Mammary epithelial cell (primary cell): ENCODE measurements at regions of chr11 and their contacts with region 1.

Region 1: DNA sequence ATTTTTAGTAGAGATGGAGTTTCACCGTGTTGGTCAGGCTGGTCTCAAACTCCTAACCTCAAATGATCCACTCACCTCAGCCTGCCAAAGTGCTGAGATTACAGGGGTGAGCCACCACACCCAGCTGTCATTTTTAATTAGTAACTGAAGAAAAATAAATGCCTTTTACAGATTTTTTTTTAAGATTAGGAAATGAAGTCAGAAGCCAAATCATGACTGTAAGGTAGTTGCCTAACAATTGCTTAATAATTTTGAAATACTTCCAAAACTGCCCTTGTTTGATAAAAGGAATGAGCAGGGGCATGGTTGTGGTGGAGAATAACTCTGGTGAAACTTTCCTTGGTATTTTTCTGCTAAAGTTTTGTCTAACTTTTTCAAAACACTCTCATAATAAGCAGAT is 98.9 kb upstream of the SLC5A12 start:
- DNase-seq: peak; percentile 89
- H3K4me3 ChIP-seq: no peak overlapping the region
- H3K27ac ChIP-seq: peak overlapping the region; percentile 55
- H3K4me1 ChIP-seq: peaks cover 3% of the 10 kb centered on the region
- H3K27me3 ChIP-seq: no peaks in the 10 kb centered on the region
- CTCF ChIP-seq: no peak

Region 2: GRCh38 chr11:26483108-26483507 is 337.6 kb before region 1 on chr11:
- CTCF ChIA-PET with region 1: interaction called, 17 read pairs
- dilution Hi-C with region 1: no loop called
- in situ Hi-C with region 1: no loop called
- intact Hi-C with region 1: no loop called
- DNase-seq: no peak
- H3K4me3 ChIP-seq: no peak overlapping the region
- H3K27ac ChIP-seq: no peak overlapping the region
- H3K4me1 ChIP-seq: no peaks in the 10 kb centered on the region
- H3K27me3 ChIP-seq: no peaks in the 10 kb centered on the region
- CTCF ChIP-seq: no peak

Region 3: DNA sequence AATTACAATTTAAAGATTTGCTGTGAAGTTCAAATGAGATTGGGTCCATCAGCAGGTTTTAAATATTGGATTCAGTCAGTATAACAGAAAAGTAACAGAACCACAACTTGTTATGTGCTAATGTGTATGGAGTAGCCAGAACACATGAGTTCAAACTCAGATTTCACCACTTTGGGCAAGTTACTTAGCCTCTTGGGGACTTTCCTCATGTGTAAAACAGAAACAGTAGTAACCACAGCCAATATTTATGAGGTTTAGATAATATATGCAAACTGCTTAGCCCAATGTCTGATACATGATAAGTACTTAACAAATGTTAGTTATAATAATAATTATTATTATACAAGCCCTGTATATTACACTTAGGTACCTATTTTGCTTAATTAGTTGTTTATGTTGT is 77.1 kb before region 1 on chr11:
- CTCF ChIA-PET with region 1: no interaction called
- dilution Hi-C with region 1: no loop called
- in situ Hi-C with region 1: no loop called
- intact Hi-C with region 1: no loop called
- DNase-seq: no peak
- H3K4me3 ChIP-seq: no peak overlapping the region
- H3K27ac ChIP-seq: no peak overlapping the region
- H3K4me1 ChIP-seq: no peaks in the 10 kb centered on the region
- H3K27me3 ChIP-seq: no peaks in the 10 kb centered on the region
- CTCF ChIP-seq: no peak